Activated T-helper 1 cell treated with anti-CD3 and anti-CD28 coated beads, Interleukin-12 subunit alpha, Interleukin-12 subunit beta, Interleukin-2, Interleukin-4 antibody, amounts not matched to agents 30 ng/mL and 10 ng/mL and 1 ng/mL, durations not matched to agents 14 hours and 24 hours and 36 hours (primary cell): ENCODE measurements at regions of chr3 and their contacts with region 1.

Region 1: GRCh38 chr3:53130179-53131061 is at the start of gene RFT1:
- DNase-seq: peak; percentile 96
- H3K4me3 Mint-ChIP-seq: peak within 1 kb of the TSS; percentile 96
- H3K27ac Mint-ChIP-seq: peak within 1 kb of the TSS; percentile 94
- H3K4me1 Mint-ChIP-seq: peaks cover 22% of the 10 kb centered on the region
- H3K27me3 Mint-ChIP-seq: no peaks in the 10 kb centered on the region
- total RNA-seq, gene RFT1: 44.9 and 46.2 TPM in 2 replicates

Region 2: DNA sequence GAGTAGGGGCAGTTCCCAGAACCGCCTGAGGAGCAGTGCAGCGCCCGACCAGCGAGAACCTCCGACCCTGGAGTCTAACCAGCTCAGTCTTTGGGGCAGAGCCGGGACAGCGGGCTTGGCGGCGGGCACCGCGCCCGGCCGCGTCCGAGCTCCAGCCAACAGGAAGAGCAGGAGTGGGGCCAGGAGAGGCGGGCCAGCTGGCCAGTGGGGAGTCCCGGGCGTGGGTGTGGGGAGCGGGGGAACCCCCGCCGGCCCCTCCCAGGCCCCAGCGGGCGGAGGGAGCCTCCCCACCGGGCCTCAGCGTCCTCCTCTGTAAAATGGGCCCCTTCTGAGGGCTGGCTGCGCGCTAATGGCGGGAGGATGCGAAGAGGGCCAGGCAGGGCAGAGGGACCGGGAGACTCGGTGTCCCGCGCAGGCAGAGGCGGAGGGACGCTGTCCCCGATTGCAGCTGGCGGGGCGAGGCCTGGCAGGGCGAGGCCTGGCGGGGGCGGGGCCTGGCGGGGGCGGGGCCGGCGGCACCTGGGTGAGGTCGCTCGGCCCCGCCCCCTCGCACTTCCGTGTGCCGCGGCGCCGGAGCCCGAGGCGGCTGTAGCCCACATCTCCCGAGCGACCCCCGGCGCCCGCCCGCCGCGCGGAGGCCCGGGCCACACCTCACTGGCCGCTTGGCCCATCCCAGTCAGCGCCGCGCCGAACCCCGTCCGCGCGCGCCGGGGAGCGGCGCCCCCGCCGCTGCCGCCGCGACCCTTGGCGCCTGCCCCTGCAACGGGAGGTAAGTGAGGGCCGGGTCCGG is 30.4 kb after region 1 on chr3 and contains the start of gene PRKCD:
- intact Hi-C with region 1: loop called (anchors 1 kb)
- DNase-seq: peak; percentile 67
- H3K4me3 Mint-ChIP-seq: peak within 1 kb of the TSS; percentile 89
- H3K27ac Mint-ChIP-seq: peak within 1 kb of the TSS; percentile 89
- H3K4me1 Mint-ChIP-seq: peaks cover 32% of the 10 kb centered on the region
- H3K27me3 Mint-ChIP-seq: peaks cover 18% of the 10 kb centered on the region
- total RNA-seq, gene PRKCD: 24.8 and 28.0 TPM in 2 replicates

Region 3: GRCh38 chr3:53195602-53196574 is 65.5 kb after region 1 on chr3:
- intact Hi-C with region 1: loop called (anchors 1 kb)
- DNase-seq: peak; percentile 48
- H3K4me3 Mint-ChIP-seq: no peak overlapping the region
- H3K27ac Mint-ChIP-seq: peak overlapping the region; percentile 56
- H3K4me1 Mint-ChIP-seq: peaks cover 11% of the 10 kb centered on the region
- H3K27me3 Mint-ChIP-seq: peaks cover 2% of the 10 kb centered on the region

Region 4: GRCh38 chr3:53347261-53348064 is 217.0 kb after region 1 on chr3 and contains the start of gene DCP1A:
- intact Hi-C with region 1: loop called (anchors 1 kb)
- DNase-seq: peak; percentile 96
- H3K4me3 Mint-ChIP-seq: peak within 1 kb of the TSS; percentile 98
- H3K27ac Mint-ChIP-seq: peak within 1 kb of the TSS; percentile 98
- H3K4me1 Mint-ChIP-seq: peaks cover 37% of the 10 kb centered on the region
- H3K27me3 Mint-ChIP-seq: no peaks in the 10 kb centered on the region
- total RNA-seq, gene DCP1A: 46.3 and 48.6 TPM in 2 replicates

Region 5: DNA sequence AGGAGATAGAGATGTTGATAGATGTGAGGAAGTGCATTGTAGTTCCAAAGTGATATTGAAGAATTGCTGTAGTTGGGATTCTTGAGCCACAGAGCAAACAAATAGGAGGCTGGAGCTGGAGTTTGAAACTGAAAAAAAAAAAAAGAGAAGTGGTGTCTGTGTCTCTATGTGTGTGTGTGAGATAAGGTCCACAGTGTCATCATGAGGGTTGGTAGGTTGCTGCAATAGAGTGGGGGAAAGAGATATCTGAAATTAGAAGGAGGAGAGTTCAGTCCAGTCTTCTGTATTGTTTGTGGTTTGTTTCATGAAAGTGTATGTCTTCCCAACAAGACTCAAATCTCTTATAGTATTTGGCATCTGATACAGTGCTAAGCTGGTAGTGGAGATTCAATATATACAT is 326.6 kb after region 1 on chr3:
- intact Hi-C with region 1: no loop called
- DNase-seq: no peak
- H3K4me3 Mint-ChIP-seq: no peak overlapping the region
- H3K27ac Mint-ChIP-seq: no peak overlapping the region
- H3K4me1 Mint-ChIP-seq: no peaks in the 10 kb centered on the region
- H3K27me3 Mint-ChIP-seq: peaks cover 2% of the 10 kb centered on the region